HAP-1 (cell line): ENCODE measurements at regions of chr1 and their contacts with region 1.

Region 1: GRCh38 chr1:215526553-215527151 is 40.5 kb upstream of the KCTD3 start:
- DNase-seq: peak in 1 of 2 experiments; percentile 59
- H3K4me3 ChIP-seq: no peak overlapping the region
- H3K4me1 ChIP-seq: no peaks in the 10 kb centered on the region
- H3K27me3 ChIP-seq: no peaks in the 10 kb centered on the region

Region 2: DNA sequence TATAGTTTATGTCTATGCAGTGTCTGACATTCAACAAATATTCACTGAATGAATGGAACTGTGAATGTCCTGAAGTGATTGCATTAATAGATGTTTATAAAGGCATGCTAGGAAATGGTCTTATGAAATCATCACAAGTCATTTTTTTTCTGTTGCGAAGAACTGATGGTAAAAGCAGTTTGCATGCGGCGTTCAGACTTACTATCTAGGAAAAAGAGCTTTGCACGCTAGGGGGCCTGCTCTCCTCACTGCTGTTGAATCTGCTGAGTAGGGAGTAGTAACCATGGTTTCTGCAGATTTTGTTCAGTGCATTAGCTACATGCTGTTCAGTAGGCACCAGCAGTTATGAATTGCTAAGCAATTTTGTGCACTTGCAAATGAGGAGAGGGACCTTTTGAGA is 865.8 kb before region 1 on chr1:
- in situ Hi-C with region 1: loop called (anchors 10 kb)
- DNase-seq: peak in 1 of 2 experiments; percentile 25
- H3K4me3 ChIP-seq: no peak overlapping the region
- H3K4me1 ChIP-seq: no peaks in the 10 kb centered on the region
- H3K27me3 ChIP-seq: no peaks in the 10 kb centered on the region

Region 3: GRCh38 chr1:214816603-214817002 is 710.0 kb before region 1 on chr1:
- in situ Hi-C with region 1: loop called (anchors 10 kb)
- DNase-seq: no peak
- H3K4me3 ChIP-seq: no peak overlapping the region
- H3K4me1 ChIP-seq: no peaks in the 10 kb centered on the region
- H3K27me3 ChIP-seq: no peaks in the 10 kb centered on the region

Region 4: DNA sequence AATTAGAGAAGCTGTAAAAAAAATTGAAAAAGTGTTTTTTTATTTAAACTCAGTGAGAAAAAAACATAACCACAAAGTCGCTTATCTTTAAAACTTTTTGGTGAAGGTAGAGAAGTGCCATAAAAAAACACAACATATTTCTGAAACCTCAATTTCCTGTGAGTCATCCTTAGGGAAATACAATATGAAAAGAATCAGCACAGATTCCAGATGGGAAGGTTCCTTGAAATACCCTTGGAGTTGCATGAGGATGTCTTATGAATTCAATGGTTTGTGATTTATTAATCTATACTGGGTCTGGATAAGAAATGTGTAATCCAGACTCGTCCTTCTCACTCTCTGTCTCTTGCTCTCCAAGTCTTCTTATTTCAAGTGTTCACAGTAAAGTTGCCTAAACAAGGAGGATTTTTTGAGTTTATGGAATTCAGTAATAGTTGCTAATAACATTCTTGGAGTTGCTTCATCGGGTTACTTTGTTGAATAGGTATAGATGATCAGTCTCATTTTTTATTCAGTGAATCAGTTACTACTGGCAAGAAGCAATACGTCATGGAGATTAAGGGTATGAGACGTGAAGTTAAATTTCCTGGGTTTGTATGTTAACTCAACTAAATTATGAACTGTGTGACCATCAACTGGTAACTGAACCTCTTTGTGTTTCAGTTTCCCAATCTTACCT is 252.7 kb before region 1 on chr1:
- in situ Hi-C with region 1: no loop called
- DNase-seq: no peak
- H3K4me3 ChIP-seq: no peak overlapping the region
- H3K4me1 ChIP-seq: no peaks in the 10 kb centered on the region; the same call in 1 of the 2 replicates
- H3K27me3 ChIP-seq: no peaks in the 10 kb centered on the region

Region 5: GRCh38 chr1:215475796-215476560 is 50.7 kb before region 1 on chr1:
- in situ Hi-C with region 1: no loop called
- DNase-seq: no peak
- H3K4me3 ChIP-seq: no peak overlapping the region
- H3K4me1 ChIP-seq: no peaks in the 10 kb centered on the region
- H3K27me3 ChIP-seq: no peaks in the 10 kb centered on the region